ENCODE measurements at regions of chr1 and their contacts with region 1.

Region 1: GRCh38 chr1:204989266-204990058 is 53.5 kb upstream of the CNTN2 start:
- DNase-seq: peak; percentile 77
- ATAC-seq: peak; percentile 93

Region 2: DNA sequence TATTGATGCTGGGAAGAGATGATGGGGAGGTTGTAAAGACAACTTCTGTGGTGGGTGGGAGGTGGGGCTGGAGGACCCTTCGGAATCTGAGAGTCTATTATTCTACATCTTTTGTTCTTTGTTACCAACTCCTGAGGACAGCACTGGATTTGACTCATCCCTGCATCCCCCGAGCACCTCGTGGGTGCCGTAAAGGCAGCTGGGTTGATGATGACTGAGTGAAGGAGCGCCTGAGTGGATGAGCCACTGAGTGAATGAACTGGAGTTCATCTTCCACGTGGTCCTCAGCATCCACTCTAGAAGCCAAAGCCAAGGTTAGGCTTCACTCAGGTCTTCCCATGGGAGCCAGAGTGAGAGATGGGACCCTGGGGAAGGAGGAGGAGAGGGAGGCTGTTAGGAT is 381.6 kb before region 1 on chr1:
- intact Hi-C with region 1: no loop called
- DNase-seq: no peak
- ATAC-seq: no peak

Region 3: DNA sequence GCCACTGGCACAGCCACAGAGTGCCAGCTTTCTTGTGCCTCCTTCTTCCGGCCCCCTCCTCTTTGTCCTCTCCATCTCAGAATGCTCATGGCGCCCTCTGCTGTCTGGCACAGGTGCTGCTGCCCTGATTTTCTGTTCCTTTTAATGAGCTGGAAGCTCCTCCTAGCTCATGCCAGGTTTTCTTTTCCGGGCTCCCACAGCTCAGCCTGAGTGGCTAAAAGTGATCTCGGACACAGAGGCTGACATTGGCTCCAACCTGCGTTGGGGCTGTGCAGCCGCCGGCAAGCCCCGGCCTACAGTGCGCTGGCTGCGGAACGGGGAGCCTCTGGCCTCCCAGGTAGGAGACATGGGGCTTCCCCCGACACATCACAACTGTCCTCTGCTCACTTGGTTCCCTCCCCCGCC is 72.2 kb after region 1 on chr1:
- intact Hi-C with region 1: loop called (anchors 2 kb)
- DNase-seq: peak; percentile 85
- ATAC-seq: peak; percentile 74

Measured in Right ventricle myocardium superior (tissue), 1 donor.